ENCODE measurements at regions of chr4 and their contacts with region 1.

Region 1: GRCh38 chr4:105088110-105088879 is 58.4 kb upstream of the TET2 start:
- DNase-seq: no peak
- ATAC-seq: no peak
- H3K4me3 ChIP-seq: no peak overlapping the region
- H3K27ac ChIP-seq: no peak overlapping the region
- H3K4me1 ChIP-seq: no peaks in the 10 kb centered on the region
- H3K27me3 ChIP-seq: no peaks in the 10 kb centered on the region
- CTCF ChIP-seq: no peak
- EP300 ChIP-seq: no peak
- POLR2A ChIP-seq: no peak
- RAD21 ChIP-seq: no peak

Region 2: DNA sequence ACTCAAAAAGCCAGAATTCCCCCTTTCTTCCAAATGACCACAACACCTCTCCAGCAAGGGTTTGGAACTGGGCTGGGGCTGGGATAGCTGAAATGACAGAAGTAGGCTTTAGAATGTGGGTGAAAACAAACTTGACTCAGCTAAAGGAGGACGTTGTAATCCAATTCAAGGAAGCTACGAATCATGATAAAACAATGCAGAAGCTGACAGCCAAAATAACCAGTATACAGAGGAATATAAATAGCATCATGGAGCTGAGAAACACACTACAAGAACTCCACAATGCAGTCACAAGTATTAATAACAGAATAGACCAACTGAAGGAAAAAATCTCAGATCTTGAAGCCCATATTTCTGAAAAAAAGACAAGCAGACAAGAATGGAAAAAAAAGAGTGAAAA is 37.4 kb before region 1 on chr4:
- CTCF ChIA-PET with region 1: no interaction called
- POLR2A ChIA-PET with region 1: no interaction called
- in situ Hi-C with region 1: no loop called
- intact Hi-C with region 1: loop called (anchors 1 kb)
- DNase-seq: no peak
- ATAC-seq: no peak
- H3K4me3 ChIP-seq: no peak overlapping the region
- H3K27ac ChIP-seq: no peak overlapping the region
- H3K4me1 ChIP-seq: no peaks in the 10 kb centered on the region
- H3K27me3 ChIP-seq: no peaks in the 10 kb centered on the region
- CTCF ChIP-seq: no peak
- EP300 ChIP-seq: no peak
- POLR2A ChIP-seq: no peak
- RAD21 ChIP-seq: no peak